Activated CD4-positive, alpha-beta memory T cell treated with anti-CD3 and anti-CD28 coated beads for 36 hours (primary cell): ENCODE measurements at regions of chr19 and their contacts with region 1.

Region 1: DNA sequence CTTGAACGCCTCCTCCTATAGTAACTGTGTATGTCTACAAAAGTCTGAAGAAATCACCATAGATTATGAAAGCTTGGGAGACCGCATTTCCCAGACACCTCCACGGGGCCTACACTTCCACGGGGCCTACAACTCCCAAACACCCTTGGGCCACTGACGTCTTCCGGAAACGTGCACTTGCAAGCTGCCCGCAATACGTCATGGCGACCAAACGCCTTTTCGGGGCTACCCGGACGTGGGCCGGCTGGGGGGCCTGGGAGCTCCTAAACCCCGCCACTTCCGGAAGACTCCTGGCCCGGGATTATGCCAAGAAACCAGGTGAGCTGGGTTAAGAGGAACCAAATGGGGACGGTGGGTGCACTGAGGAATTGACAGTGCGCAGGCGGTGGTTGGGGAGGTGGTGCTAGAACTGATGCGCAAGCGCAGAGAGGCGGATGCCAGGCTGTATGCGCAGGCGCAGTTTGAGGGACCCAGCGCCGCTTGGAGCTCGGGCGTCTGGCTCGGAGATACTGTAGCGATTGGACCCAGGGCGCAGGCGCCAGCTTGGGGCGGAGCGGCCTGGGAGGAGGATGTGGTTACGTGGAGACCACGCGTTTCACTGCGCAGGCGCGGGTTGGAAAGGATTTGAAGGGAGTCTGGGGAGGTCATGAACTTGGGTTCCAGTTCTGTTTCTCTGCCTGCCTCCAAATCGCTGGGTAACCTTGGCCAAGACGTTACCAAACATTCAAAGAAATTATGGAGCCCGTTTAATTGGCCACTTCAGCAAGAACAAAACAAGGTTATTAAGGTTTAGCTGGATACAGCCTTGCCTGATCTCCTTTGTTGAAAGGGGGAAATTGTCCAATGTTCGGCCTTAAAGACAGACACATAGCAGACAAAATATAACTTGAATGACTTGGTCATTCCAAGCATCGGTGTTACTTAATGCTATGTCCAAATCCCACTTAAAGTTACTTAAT is at the start of gene MRPL54:
- DNase-seq: peak; percentile 100
- H3K4me3 Mint-ChIP-seq: peak within 1 kb of the TSS; percentile 99
- H3K27ac Mint-ChIP-seq: peak within 1 kb of the TSS; percentile 99
- H3K4me1 Mint-ChIP-seq: peaks cover 34% of the 10 kb centered on the region
- H3K27me3 Mint-ChIP-seq: no peaks in the 10 kb centered on the region
- total RNA-seq, gene MRPL54: 63.2 to 65.2 TPM

Region 2: DNA sequence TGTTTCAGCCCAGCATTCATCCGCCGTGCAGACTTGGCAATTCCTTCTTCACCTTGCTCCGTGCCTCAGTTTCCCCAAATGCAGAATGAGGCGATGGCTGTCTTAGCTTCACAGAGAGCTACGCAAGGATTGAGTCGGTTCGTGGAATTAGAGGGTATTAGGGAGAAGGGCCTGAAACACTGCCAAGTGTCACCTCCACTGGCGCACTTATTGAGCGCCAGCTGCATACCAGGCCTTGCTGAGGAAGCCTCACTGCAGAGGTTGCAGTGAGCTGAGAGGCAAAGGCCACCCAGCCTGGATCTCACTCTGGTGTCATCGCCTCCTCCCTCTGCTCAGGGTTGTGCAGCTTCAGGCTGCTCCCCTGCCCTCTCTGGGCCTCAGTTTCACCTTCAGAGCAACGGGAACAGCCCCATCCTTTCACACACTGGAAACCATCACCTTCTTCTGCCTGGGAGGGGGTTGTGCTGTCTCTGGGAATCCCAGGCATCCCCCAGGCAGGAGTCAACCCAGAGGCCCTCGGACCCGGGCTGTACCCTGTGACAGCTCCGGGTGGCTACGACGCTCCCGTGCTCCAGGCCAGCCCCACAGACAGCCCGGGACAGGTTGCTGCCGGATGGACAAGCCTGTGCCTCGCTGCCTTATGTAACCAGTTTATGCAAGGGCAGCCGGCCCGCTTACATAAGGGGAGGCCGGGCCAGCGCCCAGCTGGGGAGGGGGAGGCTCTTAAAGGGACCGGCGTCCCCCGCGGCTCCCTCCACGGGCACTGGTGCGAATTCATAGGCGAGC is 364.5 kb before region 1 on chr19:
- CTCF ChIA-PET with region 1: no interaction called
- POLR2A ChIA-PET with region 1: no interaction called
- intact Hi-C with region 1: no loop called
- DNase-seq: no peak
- H3K4me3 Mint-ChIP-seq: no peak overlapping the region
- H3K27ac Mint-ChIP-seq: no peak overlapping the region
- H3K4me1 Mint-ChIP-seq: no peaks in the 10 kb centered on the region
- H3K27me3 Mint-ChIP-seq: no peaks in the 10 kb centered on the region

Region 3: DNA sequence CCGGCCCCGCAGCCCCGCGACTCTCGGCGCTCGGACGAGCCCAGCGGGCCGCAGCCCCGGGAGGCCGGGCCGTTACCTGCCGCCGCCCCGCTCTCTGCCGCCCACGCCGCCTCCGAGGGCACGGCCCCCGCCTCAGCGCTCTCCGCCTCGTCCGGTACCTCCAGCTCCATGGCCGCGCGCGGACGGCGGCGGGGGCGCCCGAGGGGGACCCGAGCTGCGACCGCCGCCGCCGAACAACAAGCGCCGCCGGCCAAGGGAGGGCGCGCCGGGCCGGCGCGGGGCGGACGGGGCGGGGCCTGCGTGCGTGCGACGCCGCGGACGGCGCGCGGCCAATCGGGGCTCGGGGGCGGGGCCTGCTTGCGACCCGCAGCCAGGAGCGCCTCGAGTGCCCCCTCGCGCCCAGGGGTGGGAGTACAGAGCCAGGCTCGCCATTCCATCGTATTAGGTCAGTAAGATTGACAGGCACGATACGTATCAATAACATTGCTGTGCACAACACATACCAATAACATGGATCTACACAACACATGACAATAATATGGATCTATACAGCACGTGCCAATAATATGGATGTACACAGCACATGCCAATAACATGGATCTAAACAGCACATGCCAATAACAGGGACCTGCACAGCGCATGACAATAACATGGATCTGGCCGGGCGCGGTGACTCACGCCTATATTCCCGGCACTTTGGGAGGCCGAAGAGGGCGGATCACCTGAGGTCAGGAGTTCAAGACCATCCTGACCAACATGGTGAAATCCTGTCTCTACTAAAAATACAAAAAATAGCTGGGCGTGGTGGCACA is 62.4 kb before region 1 on chr19 and contains the start of gene PIP5K1C:
- CTCF ChIA-PET with region 1: interaction called, 4 read pairs
- POLR2A ChIA-PET with region 1: no interaction called
- intact Hi-C with region 1: loop called (anchors 2 kb)
- DNase-seq: peak; percentile 94
- H3K4me3 Mint-ChIP-seq: peak within 1 kb of the TSS; percentile 90
- H3K27ac Mint-ChIP-seq: peak within 1 kb of the TSS; percentile 56
- H3K4me1 Mint-ChIP-seq: peaks cover 18% of the 10 kb centered on the region
- H3K27me3 Mint-ChIP-seq: peaks cover 2% of the 10 kb centered on the region
- total RNA-seq, gene PIP5K1C: 14.7 to 15.7 TPM

Region 4: GRCh38 chr19:3809881-3810707 is 47.3 kb after region 1 on chr19:
- CTCF ChIA-PET with region 1: interaction called, 13 read pairs
- POLR2A ChIA-PET with region 1: interaction called, 9 read pairs
- intact Hi-C with region 1: no loop called
- DNase-seq: peak; percentile 58
- H3K4me3 Mint-ChIP-seq: no peak overlapping the region
- H3K27ac Mint-ChIP-seq: peak overlapping the region; percentile 42
- H3K4me1 Mint-ChIP-seq: peaks cover 51% of the 10 kb centered on the region
- H3K27me3 Mint-ChIP-seq: no peaks in the 10 kb centered on the region

Region 5: GRCh38 chr19:3970808-3971598 is 208.2 kb after region 1 on chr19 and contains the start of gene DAPK3:
- CTCF ChIA-PET with region 1: no interaction called
- POLR2A ChIA-PET with region 1: no interaction called
- intact Hi-C with region 1: loop called (anchors 5 kb)
- DNase-seq: peak; percentile 97
- H3K4me3 Mint-ChIP-seq: peak within 1 kb of the TSS; percentile 85
- H3K27ac Mint-ChIP-seq: peak within 1 kb of the TSS; percentile 49
- H3K4me1 Mint-ChIP-seq: peaks cover 17% of the 10 kb centered on the region
- H3K27me3 Mint-ChIP-seq: no peaks in the 10 kb centered on the region
- total RNA-seq, gene DAPK3: 32.4 to 33.3 TPM

Region 6: GRCh38 chr19:4182084-4182810 is 419.5 kb after region 1 on chr19 and contains the starts of genes ANKRD24 and SIRT6:
- CTCF ChIA-PET with region 1: no interaction called
- POLR2A ChIA-PET with region 1: no interaction called
- intact Hi-C with region 1: loop called (anchors 1 kb)
- DNase-seq: peak; percentile 98
- H3K4me3 Mint-ChIP-seq: peak within 1 kb of the TSS; percentile 96
- H3K27ac Mint-ChIP-seq: peak within 1 kb of the TSS; percentile 92
- H3K4me1 Mint-ChIP-seq: peaks cover 29% of the 10 kb centered on the region
- H3K27me3 Mint-ChIP-seq: no peaks in the 10 kb centered on the region
- total RNA-seq, gene ANKRD24: 1.7 to 1.8 TPM
- total RNA-seq, gene SIRT6: 28.0 to 29.7 TPM